ENCODE measurements at regions of chr10 and their contacts with region 1.

Region 1: DNA sequence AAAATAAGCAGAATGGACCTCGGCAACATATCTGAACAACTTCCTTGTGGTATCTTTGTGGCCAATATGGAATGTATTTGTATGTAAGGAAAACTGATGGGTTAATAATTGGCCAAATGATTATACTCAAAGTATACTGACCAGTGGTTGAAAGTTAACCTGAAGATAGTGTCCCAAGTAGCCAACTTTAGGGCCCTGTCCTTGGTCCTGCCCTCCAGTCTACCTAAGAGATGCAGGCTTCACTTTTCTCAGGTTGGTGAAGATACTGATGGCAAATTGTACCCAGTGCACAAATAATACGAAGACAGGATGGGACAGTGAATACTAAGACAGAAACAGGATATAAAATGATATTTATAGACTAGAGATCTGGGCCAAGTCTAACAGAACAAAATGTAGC is 109.2 kb downstream of the SORCS3 start:
- DNase-seq: no peak
- ATAC-seq: no peak
- H3K4me3 ChIP-seq: no peak overlapping the region
- H3K27ac ChIP-seq: no peak overlapping the region
- H3K4me1 ChIP-seq: peaks cover 0 to 3% (median 0%) of the 10 kb centered on the region in 9 donors
- H3K27me3 ChIP-seq: no peaks in the 10 kb centered on the region
- CTCF ChIP-seq: no peak

Region 2: GRCh38 chr10:104515678-104516222 is 234.6 kb before region 1 on chr10:
- intact Hi-C with region 1: no loop called
- DNase-seq: no peak
- ATAC-seq: no peak
- H3K4me3 ChIP-seq: no peak overlapping the region
- H3K27ac ChIP-seq: no peak overlapping the region
- H3K4me1 ChIP-seq: no peaks in the 10 kb centered on the region
- H3K27me3 ChIP-seq: peaks cover 0 to 43% (median 0%) of the 10 kb centered on the region in 7 donors
- CTCF ChIP-seq: no peak

Region 3: GRCh38 chr10:104657457-104657856 is 92.8 kb before region 1 on chr10:
- intact Hi-C with region 1: loop called in 1 of 10 experiments (anchors 5 kb)
- DNase-seq: no peak
- ATAC-seq: no peak
- H3K4me3 ChIP-seq: no peak overlapping the region
- H3K27ac ChIP-seq: no peak overlapping the region
- H3K4me1 ChIP-seq: no peaks in the 10 kb centered on the region
- H3K27me3 ChIP-seq: peaks cover 0 to 18% (median 14%) of the 10 kb centered on the region in 7 donors
- CTCF ChIP-seq: no peak

Measured in heart right ventricle (tissue), 16 donors.